ENCODE measurements at regions of chr7 and their contacts with region 1.

Region 1: DNA sequence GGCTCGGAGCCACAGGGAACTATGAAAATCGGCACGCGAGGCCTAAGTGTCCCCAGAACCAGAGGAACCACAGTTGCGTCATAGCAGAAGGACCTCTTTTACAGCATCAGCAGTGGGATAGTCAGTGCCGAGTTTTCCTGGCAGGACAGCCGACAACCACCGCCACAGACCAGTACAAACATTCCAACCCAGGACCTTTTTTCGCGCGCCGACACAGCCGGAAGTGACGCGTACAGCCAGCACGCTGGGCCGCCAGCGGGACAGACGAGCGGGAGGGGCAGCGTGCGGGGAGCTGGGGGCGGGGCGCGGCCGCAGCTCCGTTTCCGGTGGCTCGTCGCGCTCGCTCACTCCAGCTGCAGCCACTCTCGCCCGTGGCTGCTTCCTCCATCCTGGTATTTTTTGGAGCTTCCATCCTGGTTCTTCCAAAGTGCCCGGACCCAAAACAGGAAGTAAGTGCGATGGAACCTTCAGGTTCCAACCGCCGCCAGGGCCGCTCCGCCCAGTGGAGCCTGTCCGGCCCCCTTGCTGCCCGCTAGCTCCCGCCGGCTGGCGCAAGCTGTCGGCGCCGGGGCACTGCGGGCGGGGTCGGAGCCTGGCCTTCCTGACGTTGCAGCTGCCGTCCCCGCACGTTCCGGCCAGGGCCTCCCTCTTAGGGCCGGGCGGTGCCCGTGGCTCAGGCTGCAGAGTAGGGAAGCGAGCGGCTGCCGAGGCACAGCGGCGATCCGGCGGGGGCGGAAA is at the start of gene DMTF1:
- DNase-seq: peak; percentile 83
- H3K4me3 ChIP-seq: peak within 1 kb of the TSS; percentile 81
- H3K27ac ChIP-seq: peak within 1 kb of the TSS; percentile 96
- H3K27me3 ChIP-seq: no peaks in the 10 kb centered on the region
- CTCF ChIP-seq: no peak
- polyA plus RNA-seq, gene DMTF1: 95.7 and 134 TPM in 2 replicates

Region 2: DNA sequence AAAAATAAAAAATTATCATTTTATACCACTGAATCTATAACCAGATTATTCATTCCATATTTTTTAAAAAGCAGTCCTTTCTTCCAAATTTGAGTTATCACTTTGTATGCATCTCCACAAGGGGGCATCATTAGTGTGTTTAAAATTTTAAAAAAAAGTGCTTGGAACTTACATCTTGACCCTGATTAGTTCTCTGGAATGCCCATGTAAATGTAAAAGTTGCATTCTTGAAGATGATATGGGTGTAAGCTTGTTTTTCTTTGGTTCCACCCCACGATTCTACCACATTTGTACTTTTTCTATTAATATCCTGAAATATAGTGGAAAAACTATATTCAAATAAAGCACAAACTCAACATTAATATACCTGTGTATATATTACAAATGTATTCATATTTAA is 237.7 kb before region 1 on chr7:
- CTCF ChIA-PET with region 1: interaction called, 19 read pairs
- POLR2A ChIA-PET with region 1: no interaction called
- DNase-seq: no peak
- H3K4me3 ChIP-seq: no peak overlapping the region
- H3K27ac ChIP-seq: no peak overlapping the region
- H3K27me3 ChIP-seq: no peaks in the 10 kb centered on the region
- CTCF ChIP-seq: peak; percentile 58

Region 3: DNA sequence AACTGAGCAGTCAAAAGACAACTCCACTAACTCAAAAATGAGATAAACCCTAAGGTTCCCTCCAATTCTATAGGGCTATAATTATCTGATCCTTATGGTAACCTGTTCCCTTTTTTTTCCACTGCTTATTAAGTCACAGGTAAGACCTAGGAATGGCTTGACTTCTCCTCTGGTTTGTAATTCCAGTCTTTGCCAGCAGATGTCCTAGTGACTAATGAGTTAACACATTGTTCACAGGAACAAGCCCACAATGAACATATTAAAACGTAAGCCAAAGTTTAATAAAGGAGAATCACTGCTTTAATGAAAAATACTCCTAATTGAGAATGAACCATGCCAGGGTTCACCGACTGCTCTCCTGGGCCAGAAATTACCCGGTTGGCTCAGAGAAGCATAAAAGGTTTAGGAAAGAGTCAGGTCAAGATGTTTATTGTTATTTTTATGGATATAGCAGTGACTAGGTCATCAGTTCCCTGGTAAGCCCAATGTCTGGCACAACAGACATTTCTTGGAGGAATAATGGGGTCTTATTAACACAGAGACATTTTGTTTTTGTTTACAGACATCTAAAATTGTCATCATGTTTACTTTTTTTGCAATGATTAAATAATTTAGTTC is 213.0 kb before region 1 on chr7:
- CTCF ChIA-PET with region 1: interaction called, 54 read pairs
- POLR2A ChIA-PET with region 1: no interaction called
- DNase-seq: peak; percentile 20
- H3K4me3 ChIP-seq: no peak overlapping the region
- H3K27ac ChIP-seq: no peak overlapping the region
- H3K27me3 ChIP-seq: no peaks in the 10 kb centered on the region
- CTCF ChIP-seq: peak; percentile 73

Region 4: GRCh38 chr7:87219545-87220025 is 67.3 kb after region 1 on chr7 and contains the start of gene TMEM243:
- CTCF ChIA-PET with region 1: interaction called, 4 read pairs
- POLR2A ChIA-PET with region 1: interaction called, 39 read pairs
- DNase-seq: peak; percentile 44
- H3K4me3 ChIP-seq: peak within 1 kb of the TSS; percentile 91
- H3K27ac ChIP-seq: peak within 1 kb of the TSS; percentile 75
- H3K27me3 ChIP-seq: peaks cover 5% of the 10 kb centered on the region
- CTCF ChIP-seq: peak; percentile 14
- polyA plus RNA-seq, gene TMEM243: 35.4 and 50.2 TPM in 2 replicates